Activated CD8-positive, alpha-beta T cell treated with anti-CD3 and anti-CD28 coated beads for 36 hours (primary cell): ENCODE measurements at regions of chr7 and their contacts with region 1.

Region 1: DNA sequence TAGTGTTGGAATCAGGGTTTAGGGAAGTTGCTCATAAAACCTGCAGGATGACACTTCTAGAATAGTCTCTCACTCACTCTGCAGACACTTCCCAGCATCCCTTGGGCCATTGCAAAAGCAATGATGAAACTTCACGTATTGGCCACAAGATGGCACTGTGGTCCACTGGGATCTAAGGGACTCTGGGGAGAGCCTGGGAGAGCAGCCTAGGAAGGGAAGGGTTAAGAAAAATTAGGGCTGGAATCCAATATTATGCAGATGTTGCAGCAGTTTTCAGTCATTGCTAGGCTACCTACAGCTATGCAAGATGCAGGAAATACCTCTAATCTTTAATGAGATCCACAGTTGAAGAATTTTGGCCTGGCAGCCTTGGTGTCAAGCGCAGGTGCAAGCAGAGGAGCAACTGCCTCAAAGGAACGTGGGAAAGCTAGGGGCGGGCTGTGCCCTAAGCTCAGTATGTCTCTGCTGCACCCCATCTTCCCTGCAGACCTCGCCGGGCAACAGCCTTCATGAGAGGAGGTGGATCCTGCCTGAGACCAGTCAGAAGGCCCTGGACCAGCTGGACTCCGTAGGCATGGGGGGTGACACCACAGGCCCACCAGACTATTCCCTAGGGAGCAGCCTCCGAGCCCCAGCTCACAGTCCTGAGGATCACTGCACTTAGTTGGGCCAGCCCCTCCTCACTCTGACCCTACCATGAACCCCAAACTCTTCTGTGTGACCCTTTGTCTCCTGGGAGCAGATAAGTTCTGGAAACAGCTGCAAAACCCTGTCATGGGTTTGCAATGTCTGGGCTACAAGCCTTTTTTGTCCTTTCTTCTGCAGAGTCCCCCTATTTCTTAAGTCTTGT is 127.9 kb upstream of the PRSS58 start:
- DNase-seq: peak; percentile 57
- ATAC-seq: peak; percentile 64
- H3K4me3 Mint-ChIP-seq: peak overlapping the region; percentile 66
- H3K27ac Mint-ChIP-seq: no peak overlapping the region
- H3K4me1 Mint-ChIP-seq: peaks cover 20% of the 10 kb centered on the region
- H3K27me3 Mint-ChIP-seq: peaks cover 1% of the 10 kb centered on the region
- CTCF ChIP-seq: peak; percentile 63

Region 2: GRCh38 chr7:142352543-142352942 is 33.2 kb before region 1 on chr7:
- CTCF ChIA-PET with region 1: interaction called, 19 read pairs
- POLR2A ChIA-PET with region 1: interaction called, 3 read pairs
- intact Hi-C with region 1: no loop called
- DNase-seq: peak; percentile 29
- ATAC-seq: peak; percentile 71
- H3K4me3 Mint-ChIP-seq: peak overlapping the region; percentile 69
- H3K27ac Mint-ChIP-seq: peak overlapping the region; percentile 67
- H3K4me1 Mint-ChIP-seq: peaks cover 21% of the 10 kb centered on the region
- H3K27me3 Mint-ChIP-seq: peaks cover 2% of the 10 kb centered on the region
- CTCF ChIP-seq: no peak

Region 3: DNA sequence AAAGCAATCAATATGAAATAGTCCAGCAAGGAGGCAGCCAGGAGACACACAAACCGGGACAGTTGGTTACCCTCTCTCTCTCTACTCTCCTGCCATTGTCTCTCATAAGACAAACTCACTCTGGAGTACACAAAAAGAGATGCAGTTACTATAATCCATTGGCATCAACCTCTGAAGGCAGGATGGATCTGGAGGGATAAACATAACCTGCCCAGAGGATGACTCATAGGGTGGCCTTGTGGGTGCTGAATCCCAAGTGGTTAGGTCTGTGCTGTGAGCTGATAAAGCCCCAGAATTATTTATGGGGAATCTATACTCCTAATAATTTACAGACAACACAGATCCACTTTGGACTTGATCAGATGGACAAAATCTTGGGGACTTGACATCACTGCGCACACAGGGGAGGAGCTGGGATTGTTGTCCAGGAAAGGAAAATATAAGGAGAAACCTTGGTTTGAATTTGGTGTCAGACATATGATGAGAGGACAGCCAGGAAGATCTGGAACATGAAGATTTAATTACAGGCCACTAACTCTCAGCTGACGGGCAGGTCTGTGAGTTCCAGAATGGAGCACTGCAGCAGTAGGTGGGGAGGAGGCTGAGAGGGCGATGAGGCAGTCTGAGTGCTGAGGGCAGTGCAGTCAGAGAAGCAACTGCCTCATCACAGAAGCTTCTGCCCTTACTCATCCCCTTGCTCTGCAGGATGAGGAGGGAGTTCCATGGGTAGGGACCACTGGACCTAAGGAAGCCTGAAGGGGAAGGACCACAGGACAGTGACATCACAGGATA is 13.9 kb before region 1 on chr7:
- CTCF ChIA-PET with region 1: interaction called, 10 read pairs
- POLR2A ChIA-PET with region 1: no interaction called
- intact Hi-C with region 1: no loop called
- DNase-seq: no peak
- ATAC-seq: no peak
- H3K4me3 Mint-ChIP-seq: no peak overlapping the region
- H3K27ac Mint-ChIP-seq: no peak overlapping the region
- H3K4me1 Mint-ChIP-seq: no peaks in the 10 kb centered on the region
- H3K27me3 Mint-ChIP-seq: no peaks in the 10 kb centered on the region
- CTCF ChIP-seq: no peak

Region 4: DNA sequence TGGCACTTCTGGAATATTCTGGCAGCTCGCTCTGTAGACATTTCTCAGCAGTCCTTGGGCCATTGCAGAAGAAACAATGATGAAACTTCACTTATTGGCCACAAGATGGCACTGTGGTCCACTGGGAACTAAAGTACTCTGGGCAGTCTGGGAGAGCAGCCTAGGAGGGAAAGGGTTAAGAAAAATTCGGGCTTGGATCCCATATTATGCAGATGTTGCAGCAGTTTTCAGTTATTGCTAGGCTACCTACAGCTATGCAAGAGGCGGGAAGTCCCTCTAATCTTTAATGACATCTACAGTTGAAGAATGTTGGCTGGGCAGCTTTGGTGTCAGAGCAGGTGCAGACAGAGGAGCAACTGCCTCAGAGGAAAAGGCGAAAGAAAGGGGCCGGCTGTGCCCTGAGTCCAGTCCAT is 73.8 kb after region 1 on chr7:
- CTCF ChIA-PET with region 1: interaction called, 17 read pairs
- POLR2A ChIA-PET with region 1: no interaction called
- intact Hi-C with region 1: no loop called
- DNase-seq: peak; percentile 51
- ATAC-seq: peak; percentile 59
- H3K4me3 Mint-ChIP-seq: no peak overlapping the region
- H3K27ac Mint-ChIP-seq: no peak overlapping the region
- H3K4me1 Mint-ChIP-seq: peaks cover 46% of the 10 kb centered on the region
- H3K27me3 Mint-ChIP-seq: no peaks in the 10 kb centered on the region
- CTCF ChIP-seq: peak; percentile 74

Region 5: DNA sequence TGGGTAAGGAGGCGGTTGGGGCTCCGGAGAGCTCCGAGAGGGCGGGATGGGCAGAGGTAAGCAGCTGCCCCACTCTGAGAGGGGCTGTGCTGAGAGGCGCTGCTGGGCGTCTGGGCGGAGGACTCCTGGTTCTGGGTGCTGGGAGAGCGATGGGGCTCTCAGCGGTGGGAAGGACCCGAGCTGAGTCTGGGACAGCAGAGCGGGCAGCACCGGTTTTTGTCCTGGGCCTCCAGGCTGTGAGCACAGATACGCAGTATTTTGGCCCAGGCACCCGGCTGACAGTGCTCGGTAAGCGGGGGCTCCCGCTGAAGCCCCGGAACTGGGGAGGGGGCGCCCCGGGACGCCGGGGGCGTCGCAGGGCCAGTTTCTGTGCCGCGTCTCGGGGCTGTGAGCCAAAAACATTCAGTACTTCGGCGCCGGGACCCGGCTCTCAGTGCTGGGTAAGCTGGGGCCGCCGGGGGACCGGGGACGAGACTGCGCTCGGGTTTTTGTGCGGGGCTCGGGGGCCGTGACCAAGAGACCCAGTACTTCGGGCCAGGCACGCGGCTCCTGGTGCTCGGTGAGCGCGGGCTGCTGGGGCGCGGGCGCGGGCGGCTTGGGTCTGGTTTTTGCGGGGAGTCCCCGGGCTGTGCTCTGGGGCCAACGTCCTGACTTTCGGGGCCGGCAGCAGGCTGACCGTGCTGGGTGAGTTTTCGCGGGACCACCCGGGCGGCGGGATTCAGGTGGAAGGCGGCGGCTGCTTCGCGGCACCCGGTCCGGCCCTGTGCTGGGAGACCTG is 411.1 kb after region 1 on chr7:
- CTCF ChIA-PET with region 1: no interaction called
- POLR2A ChIA-PET with region 1: interaction called, 4 read pairs
- intact Hi-C with region 1: loop called (anchors 5 kb)
- DNase-seq: peak; percentile 23
- ATAC-seq: no peak
- H3K4me3 Mint-ChIP-seq: peak overlapping the region; percentile 100
- H3K27ac Mint-ChIP-seq: peak overlapping the region; percentile 97
- H3K4me1 Mint-ChIP-seq: peaks cover 52% of the 10 kb centered on the region
- H3K27me3 Mint-ChIP-seq: no peaks in the 10 kb centered on the region
- CTCF ChIP-seq: no peak

Region 6: DNA sequence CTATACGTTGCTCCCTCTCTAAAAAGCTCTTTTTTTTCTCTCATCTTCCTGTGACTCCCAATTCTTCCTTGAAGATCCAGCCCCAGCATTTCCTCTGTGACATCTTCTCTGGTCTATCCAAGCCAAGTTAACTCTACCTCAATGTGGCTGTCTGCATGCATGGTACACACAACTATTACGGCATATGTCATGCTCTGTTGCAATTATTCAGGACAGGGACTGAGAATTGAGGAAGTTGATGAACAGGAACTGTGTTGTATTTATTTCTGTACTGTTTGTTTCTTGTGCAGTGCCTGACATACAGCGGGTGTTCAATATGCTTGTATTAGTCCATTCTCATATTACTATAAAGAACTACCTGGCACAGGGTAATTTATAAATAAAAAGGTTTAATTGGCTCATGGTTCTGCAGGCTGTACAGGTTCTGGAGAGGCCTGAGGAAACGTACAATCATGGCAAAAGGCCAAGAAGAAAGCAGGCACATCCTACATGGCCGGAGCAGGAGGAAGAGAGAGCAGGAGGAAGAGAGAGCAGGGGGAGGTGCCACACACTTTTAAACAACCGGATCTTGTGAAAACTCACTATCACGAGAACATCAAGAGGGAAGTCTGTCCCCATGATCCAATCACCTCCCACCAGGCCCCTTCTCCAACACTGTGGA is 541.5 kb after region 1 on chr7:
- CTCF ChIA-PET with region 1: no interaction called
- POLR2A ChIA-PET with region 1: no interaction called
- intact Hi-C with region 1: no loop called
- DNase-seq: no peak
- ATAC-seq: no peak
- H3K4me3 Mint-ChIP-seq: no peak overlapping the region
- H3K27ac Mint-ChIP-seq: no peak overlapping the region
- H3K4me1 Mint-ChIP-seq: no peaks in the 10 kb centered on the region
- H3K27me3 Mint-ChIP-seq: no peaks in the 10 kb centered on the region
- CTCF ChIP-seq: no peak